B cell (primary cell): ENCODE measurements at regions of chr13 and their contacts with region 1.

Region 1: GRCh38 chr13:50801087-50801931 is 42.2 kb downstream of the DLEU7 start:
- DNase-seq: peak; percentile 91
- ATAC-seq: peak; percentile 82
- H3K4me3 ChIP-seq: peak overlapping the region in 2 of 5 experiments; percentile 31 to 47
- H3K4me3 Mint-ChIP-seq: peak overlapping the region; percentile 73
- H3K27ac ChIP-seq: peak overlapping the region; percentile 78 to 88
- H3K27ac Mint-ChIP-seq: peak overlapping the region; percentile 91
- H3K4me1 ChIP-seq: peaks cover 46 to 47% of the 10 kb centered on the region in 2 donors
- H3K4me1 Mint-ChIP-seq: peaks cover 44% of the 10 kb centered on the region
- H3K27me3 ChIP-seq: no peaks in the 10 kb centered on the region
- H3K27me3 Mint-ChIP-seq: no peaks in the 10 kb centered on the region
- CTCF ChIP-seq: peak; percentile 85

Region 2: GRCh38 chr13:48913827-48914226 is 1887.5 kb before region 1 on chr13:
- CTCF ChIA-PET with region 1: no interaction called
- POLR2A ChIA-PET with region 1: no interaction called
- intact Hi-C with region 1: no loop called
- DNase-seq: no peak
- ATAC-seq: no peak
- H3K4me3 ChIP-seq: no peak overlapping the region
- H3K4me3 Mint-ChIP-seq: no peak overlapping the region
- H3K27ac ChIP-seq: no peak overlapping the region
- H3K27ac Mint-ChIP-seq: no peak overlapping the region
- H3K4me1 ChIP-seq: no peaks in the 10 kb centered on the region
- H3K4me1 Mint-ChIP-seq: no peaks in the 10 kb centered on the region
- H3K27me3 ChIP-seq: peaks cover 0 to 3% (median 0%) of the 10 kb centered on the region in 4 experiments
- H3K27me3 Mint-ChIP-seq: peaks cover 29% of the 10 kb centered on the region
- CTCF ChIP-seq: no peak

Region 3: GRCh38 chr13:50081679-50082425 is 719.5 kb before region 1 on chr13:
- CTCF ChIA-PET with region 1: interaction called, 39 read pairs
- POLR2A ChIA-PET with region 1: interaction called, 7 read pairs
- intact Hi-C with region 1: loop called (anchors 1 kb)
- DNase-seq: peak; percentile 99
- ATAC-seq: peak; percentile 77
- H3K4me3 ChIP-seq: peak overlapping the region; percentile 81 to 99 (median 91)
- H3K4me3 Mint-ChIP-seq: peak overlapping the region; percentile 94
- H3K27ac ChIP-seq: peak overlapping the region; percentile 82 to 85
- H3K27ac Mint-ChIP-seq: peak overlapping the region; percentile 94
- H3K4me1 ChIP-seq: peaks cover 29 to 48% of the 10 kb centered on the region in 2 donors
- H3K4me1 Mint-ChIP-seq: peaks cover 57% of the 10 kb centered on the region
- H3K27me3 ChIP-seq: no peaks in the 10 kb centered on the region
- H3K27me3 Mint-ChIP-seq: no peaks in the 10 kb centered on the region
- CTCF ChIP-seq: no peak

Region 4: GRCh38 chr13:50236898-50237318 is 564.4 kb before region 1 on chr13:
- CTCF ChIA-PET with region 1: no interaction called
- POLR2A ChIA-PET with region 1: no interaction called
- intact Hi-C with region 1: loop called (anchors 10 kb)
- DNase-seq: peak; percentile 61
- ATAC-seq: peak; percentile 79
- H3K4me3 ChIP-seq: peak overlapping the region in 3 of 5 experiments; percentile 13 to 59 (median 35)
- H3K4me3 Mint-ChIP-seq: peak overlapping the region; percentile 88
- H3K27ac ChIP-seq: peak overlapping the region in 1 of 2 donors; percentile 13
- H3K27ac Mint-ChIP-seq: peak overlapping the region; percentile 83
- H3K4me1 ChIP-seq: peaks cover 3 to 8% of the 10 kb centered on the region in 2 donors
- H3K4me1 Mint-ChIP-seq: peaks cover 27% of the 10 kb centered on the region
- H3K27me3 ChIP-seq: no peaks in the 10 kb centered on the region
- H3K27me3 Mint-ChIP-seq: no peaks in the 10 kb centered on the region
- CTCF ChIP-seq: no peak

Region 5: GRCh38 chr13:50476577-50477285 is 324.6 kb before region 1 on chr13:
- CTCF ChIA-PET with region 1: interaction called, 7 read pairs
- POLR2A ChIA-PET with region 1: no interaction called
- intact Hi-C with region 1: loop called (anchors 1 kb)
- DNase-seq: no peak
- ATAC-seq: no peak
- H3K4me3 ChIP-seq: no peak overlapping the region
- H3K4me3 Mint-ChIP-seq: no peak overlapping the region
- H3K27ac ChIP-seq: no peak overlapping the region
- H3K27ac Mint-ChIP-seq: no peak overlapping the region
- H3K4me1 ChIP-seq: peaks cover 0 to 8% of the 10 kb centered on the region in 2 donors
- H3K4me1 Mint-ChIP-seq: peaks cover 10% of the 10 kb centered on the region
- H3K27me3 ChIP-seq: no peaks in the 10 kb centered on the region
- H3K27me3 Mint-ChIP-seq: no peaks in the 10 kb centered on the region
- CTCF ChIP-seq: no peak

Region 6: DNA sequence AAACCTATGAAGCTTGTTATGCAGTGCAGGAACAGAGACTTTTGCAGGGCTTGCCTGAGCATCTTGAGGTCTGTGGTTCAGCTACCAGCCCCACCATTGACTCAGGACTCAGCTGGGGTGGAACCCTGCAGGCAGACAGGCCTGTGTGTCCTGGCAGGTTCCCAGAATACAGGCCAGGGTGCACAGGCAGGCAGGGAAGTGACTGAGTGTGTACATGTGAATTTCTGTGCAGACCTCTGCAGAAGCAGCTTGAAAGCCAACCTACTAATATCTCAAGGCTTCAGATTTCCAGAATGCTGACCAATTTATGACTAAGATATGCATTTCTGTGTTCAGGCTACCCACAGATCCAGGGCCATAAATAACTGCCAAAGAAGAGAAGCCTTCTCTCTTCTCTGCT is 212.2 kb before region 1 on chr13:
- CTCF ChIA-PET with region 1: interaction called, 21 read pairs
- POLR2A ChIA-PET with region 1: interaction called, 5 read pairs
- intact Hi-C with region 1: loop called (anchors 1 kb)
- DNase-seq: no peak
- ATAC-seq: no peak
- H3K4me3 ChIP-seq: no peak overlapping the region
- H3K4me3 Mint-ChIP-seq: no peak overlapping the region
- H3K27ac ChIP-seq: no peak overlapping the region
- H3K27ac Mint-ChIP-seq: peak overlapping the region; percentile 53
- H3K4me1 ChIP-seq: peaks cover 78 to 81% of the 10 kb centered on the region in 2 donors
- H3K4me1 Mint-ChIP-seq: peaks cover 70% of the 10 kb centered on the region
- H3K27me3 ChIP-seq: no peaks in the 10 kb centered on the region
- H3K27me3 Mint-ChIP-seq: no peaks in the 10 kb centered on the region
- CTCF ChIP-seq: no peak

Region 7: DNA sequence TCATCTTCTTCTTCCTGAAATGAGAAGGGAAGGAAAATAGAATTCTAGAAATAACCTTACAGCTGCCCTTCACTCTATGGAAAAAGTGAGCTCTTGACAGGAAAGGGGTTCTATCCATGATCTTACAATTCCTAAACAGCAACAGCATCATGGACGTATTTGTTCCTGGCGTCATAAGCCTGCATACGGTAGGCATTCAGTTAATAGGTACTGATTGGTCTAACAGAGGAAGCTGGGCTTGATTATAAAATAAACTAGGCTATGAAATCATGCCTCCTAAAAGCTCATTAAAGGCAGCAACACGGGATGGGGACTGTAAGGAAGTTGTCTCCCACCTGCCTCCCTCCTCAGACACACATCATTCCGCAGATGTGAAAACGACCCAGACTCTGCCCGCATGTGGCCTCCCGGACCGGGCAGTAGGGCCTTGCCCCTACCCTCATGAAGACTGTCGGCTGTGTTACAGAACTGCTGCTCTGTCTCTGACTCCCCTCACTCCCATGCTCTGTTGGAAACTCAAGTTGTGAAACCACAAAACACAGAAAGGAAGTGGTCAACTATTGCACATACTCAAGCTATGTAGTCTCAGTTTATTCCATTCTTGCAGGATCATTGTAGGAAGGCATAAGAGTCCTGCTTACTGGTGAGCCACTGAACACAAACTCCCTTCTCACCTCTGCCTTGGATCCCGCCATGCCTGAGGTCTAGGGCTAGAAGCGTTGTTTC is 87.6 kb before region 1 on chr13:
- CTCF ChIA-PET with region 1: interaction called, 13 read pairs
- POLR2A ChIA-PET with region 1: no interaction called
- intact Hi-C with region 1: no loop called
- DNase-seq: peak; percentile 43
- ATAC-seq: peak; percentile 69
- H3K4me3 ChIP-seq: peak overlapping the region; percentile 1 to 40 (median 23)
- H3K4me3 Mint-ChIP-seq: peak overlapping the region; percentile 81
- H3K27ac ChIP-seq: no peak overlapping the region
- H3K27ac Mint-ChIP-seq: peak overlapping the region; percentile 69
- H3K4me1 ChIP-seq: peaks cover 23 to 35% of the 10 kb centered on the region in 2 donors
- H3K4me1 Mint-ChIP-seq: peaks cover 38% of the 10 kb centered on the region
- H3K27me3 ChIP-seq: no peaks in the 10 kb centered on the region
- H3K27me3 Mint-ChIP-seq: no peaks in the 10 kb centered on the region
- CTCF ChIP-seq: no peak